IMR-90 (cell line): ENCODE measurements at regions of chr1 and their contacts with region 1.

Region 1: DNA sequence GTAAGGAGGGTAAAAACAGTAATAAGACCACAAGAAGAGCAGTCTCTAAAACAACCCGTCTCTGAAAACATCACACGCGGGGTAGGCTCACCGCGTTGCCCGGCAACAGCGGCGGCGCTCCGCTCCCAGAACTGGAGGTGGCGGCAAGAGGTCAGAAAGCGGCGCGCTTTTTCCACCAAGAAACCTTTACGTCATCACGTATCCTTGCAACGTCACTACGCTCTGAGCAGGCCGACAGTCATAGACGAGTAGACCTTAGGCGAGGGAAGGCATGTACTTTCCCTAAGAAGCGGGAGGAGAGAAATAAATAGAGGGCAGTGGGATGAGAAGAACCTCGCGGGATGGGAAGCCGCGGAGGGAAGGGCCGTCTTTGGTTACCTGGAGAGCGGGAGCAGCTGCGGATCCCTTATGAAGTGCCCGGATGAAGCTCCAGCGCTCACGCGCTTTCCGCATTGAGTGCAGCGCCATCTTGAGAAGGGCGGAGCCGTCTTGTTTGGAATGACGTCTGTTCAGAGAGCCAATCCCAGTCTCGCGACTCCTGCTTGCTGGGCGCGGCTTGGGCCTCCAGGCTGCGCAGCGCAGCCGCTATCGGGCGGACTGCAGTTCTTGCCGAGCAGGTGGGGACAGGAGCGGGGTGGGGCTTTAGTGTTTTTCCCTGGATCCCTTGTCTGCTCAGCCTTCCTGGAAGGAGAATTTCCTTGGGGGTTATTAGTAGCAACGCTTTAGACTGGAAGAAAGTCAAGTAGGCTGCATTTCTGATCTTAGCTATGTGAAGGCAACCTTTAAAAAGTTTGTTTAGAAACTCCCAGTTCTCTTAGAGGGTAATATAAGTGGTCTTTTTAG is at the start of gene WARS2:
- DNase-seq: peak; percentile 98
- ATAC-seq: peak; percentile 99
- H3K4me3 ChIP-seq: peak within 1 kb of the TSS; percentile 52
- H3K27ac ChIP-seq: peak within 1 kb of the TSS; percentile 79
- H3K4me1 ChIP-seq: peaks cover 3% of the 10 kb centered on the region
- H3K27me3 ChIP-seq: no peaks in the 10 kb centered on the region
- CTCF ChIP-seq: 0 out of 2 replicates have a peak, but pooled peaks have one; percentile 4
- POLR2A ChIP-seq: peak; percentile 97
- RAD21 ChIP-seq: no peak
- total RNA-seq, gene WARS2: 18.3 and 20.3 TPM in 2 replicates

Region 2: GRCh38 chr1:119008483-119009311 is 131.7 kb before region 1 on chr1:
- CTCF ChIA-PET with region 1: no interaction called
- POLR2A ChIA-PET with region 1: no interaction called
- dilution Hi-C with region 1: no loop called
- in situ Hi-C with region 1: no loop called
- intact Hi-C with region 1: loop called (anchors 10 kb)
- DNase-seq: peak; percentile 54
- ATAC-seq: peak; percentile 82
- H3K4me3 ChIP-seq: peak overlapping the region; percentile 29
- H3K27ac ChIP-seq: no peak overlapping the region
- H3K4me1 ChIP-seq: no peaks in the 10 kb centered on the region; the same call in 1 of the 2 replicates
- H3K27me3 ChIP-seq: peaks cover 58% of the 10 kb centered on the region
- CTCF ChIP-seq: peak; percentile 61
- POLR2A ChIP-seq: no peak
- RAD21 ChIP-seq: peak; percentile 52

Region 3: DNA sequence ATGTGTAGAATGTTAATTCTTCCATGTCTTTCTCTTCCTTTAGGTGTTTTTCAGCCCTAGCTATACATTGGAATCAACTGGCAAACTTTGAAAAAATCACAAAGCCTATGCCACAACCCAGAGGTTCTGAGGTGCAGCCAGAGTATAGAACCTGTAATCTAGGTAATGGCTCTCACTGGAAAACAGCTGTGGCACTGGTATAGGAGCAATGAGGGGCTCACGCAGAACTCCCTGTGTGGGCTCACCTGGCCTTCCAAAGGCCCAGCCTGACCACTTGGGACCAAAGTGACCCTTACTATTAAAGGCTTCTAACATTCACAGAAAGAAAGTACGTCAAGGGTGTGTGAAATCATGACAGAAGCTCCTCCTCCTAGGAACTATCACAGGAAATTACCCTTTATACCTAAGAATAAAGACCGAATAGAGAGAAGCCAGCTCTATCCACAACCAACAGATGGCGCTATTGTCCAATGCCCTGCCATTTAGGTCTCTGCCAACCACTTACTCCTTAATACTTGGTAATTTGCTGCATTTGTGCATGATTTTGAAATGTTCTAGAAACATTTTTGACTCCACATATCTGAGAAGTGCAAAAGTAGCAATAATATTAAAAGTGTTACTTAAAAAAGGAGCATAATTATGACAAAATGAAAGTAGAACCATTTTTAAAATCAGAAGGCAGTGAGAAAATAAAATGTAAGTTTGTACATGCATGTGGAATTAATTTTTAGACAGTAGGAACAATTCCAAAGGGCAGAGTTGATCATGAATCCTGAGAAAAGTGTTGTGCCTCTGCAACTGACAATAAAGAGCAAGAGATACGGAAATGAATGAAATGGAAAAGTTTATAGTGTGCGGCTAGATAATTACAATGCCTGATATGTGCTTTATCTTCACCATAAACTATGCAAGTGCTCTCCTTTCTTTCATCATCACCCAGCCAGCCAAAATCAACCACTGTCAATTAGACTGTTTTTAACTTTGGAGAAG is 135.0 kb after region 1 on chr1:
- CTCF ChIA-PET with region 1: no interaction called
- POLR2A ChIA-PET with region 1: no interaction called
- dilution Hi-C with region 1: no loop called
- in situ Hi-C with region 1: no loop called
- intact Hi-C with region 1: loop called (anchors 5 kb)
- DNase-seq: peak; percentile 67
- ATAC-seq: peak; percentile 92
- H3K4me3 ChIP-seq: no peak overlapping the region
- H3K27ac ChIP-seq: no peak overlapping the region
- H3K4me1 ChIP-seq: peaks cover 4% of the 10 kb centered on the region
- H3K27me3 ChIP-seq: peaks cover 2% of the 10 kb centered on the region
- CTCF ChIP-seq: peak; percentile 91
- POLR2A ChIP-seq: no peak
- RAD21 ChIP-seq: peak; percentile 82

Region 4: DNA sequence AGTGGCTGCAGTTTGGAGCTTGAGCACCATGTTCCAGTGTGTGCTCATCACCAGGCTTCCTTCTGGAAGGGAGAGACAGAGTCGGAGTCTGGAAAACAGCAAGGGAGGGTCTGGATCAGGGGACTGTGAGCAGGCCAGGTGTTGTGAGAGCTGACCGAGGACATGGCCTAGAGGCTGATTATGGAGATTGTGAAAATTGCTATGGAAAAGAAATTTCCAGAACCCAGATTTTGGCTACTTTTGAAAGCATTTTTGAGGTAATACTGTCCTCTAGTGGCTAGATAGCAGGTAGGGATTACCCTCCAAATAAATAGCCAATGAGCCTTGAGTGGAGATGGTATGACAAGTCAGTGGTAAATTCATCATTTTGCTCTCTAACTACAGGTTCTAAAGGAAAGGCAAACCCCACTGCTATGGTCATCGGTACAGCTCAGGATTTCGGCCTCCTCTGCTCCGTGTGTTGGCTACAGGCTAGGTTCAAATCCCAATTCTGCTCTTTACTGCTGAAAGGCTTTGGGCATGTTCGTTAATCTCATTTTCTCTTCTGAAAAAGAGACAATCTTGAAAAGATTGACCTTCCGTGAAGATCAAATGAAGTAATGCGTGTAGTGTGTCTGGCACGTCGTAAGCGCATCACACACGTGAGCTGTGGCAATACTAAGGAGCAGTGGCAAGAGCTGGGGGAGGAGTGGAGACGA is 227.2 kb after region 1 on chr1:
- CTCF ChIA-PET with region 1: no interaction called
- POLR2A ChIA-PET with region 1: no interaction called
- dilution Hi-C with region 1: no loop called
- in situ Hi-C with region 1: no loop called
- intact Hi-C with region 1: loop called (anchors 5 kb)
- DNase-seq: peak; percentile 45
- ATAC-seq: peak; percentile 77
- H3K4me3 ChIP-seq: no peak overlapping the region
- H3K27ac ChIP-seq: no peak overlapping the region
- H3K4me1 ChIP-seq: no peaks in the 10 kb centered on the region
- H3K27me3 ChIP-seq: peaks cover 8% of the 10 kb centered on the region
- CTCF ChIP-seq: peak; percentile 97
- POLR2A ChIP-seq: 0 out of 2 replicates have a peak, but pooled peaks have one; percentile 31
- RAD21 ChIP-seq: peak; percentile 96